Right ventricle myocardium inferior (tissue), 1 donor: ENCODE measurements at regions of chr1 and their contacts with region 1.

Region 1: DNA sequence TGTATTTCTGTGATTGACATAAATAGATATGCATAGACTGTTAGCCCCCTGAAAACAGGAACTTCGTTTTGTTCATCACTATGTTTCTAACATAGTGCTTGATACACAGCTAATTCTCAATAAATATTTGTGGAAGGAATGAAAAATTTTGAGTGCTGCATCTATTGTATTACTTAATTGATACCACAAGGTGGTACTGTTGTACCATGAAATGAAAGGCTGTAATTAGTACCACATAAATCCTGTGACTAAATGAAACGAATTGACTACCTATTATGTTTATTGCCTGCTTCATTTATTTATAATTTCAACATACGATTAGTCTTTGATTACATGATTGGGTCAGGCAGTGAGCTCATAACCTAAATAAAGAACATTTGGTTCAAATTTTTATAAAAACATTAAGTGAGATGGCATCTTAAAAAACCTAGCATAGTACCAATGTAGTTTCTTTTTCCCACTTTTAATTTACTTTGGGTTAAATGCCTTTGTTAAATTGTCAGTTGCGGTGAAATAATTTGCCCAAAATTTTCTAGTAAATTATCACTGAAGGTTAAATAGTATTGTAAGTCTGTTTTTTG is 15.0 kb upstream of the TGFB2 start:
- DNase-seq: no peak
- ATAC-seq: no peak

Region 2: DNA sequence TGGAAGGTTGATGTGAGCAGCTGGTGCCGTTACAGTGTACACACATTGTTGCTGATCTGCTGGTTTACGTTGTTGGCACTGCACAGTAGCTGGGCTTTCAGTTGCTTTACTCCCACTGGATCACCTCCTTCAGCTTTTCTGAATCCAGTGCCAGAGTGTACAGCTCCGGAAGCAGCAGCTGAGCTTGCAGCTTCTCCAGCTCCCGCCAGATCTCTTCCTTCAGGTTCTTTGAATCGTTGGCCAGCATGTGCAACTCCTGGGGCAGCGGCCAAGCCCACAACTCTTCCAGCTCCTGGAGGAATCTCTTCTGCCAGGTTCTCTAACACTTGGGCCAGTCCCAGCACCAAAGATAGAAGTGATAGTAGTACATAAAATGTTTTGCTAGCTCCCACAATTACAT is 194.8 kb before region 1 on chr1:
- intact Hi-C with region 1: no loop called
- DNase-seq: no peak
- ATAC-seq: no peak

Region 3: GRCh38 chr1:218401998-218402785 is 72.1 kb after region 1 on chr1:
- intact Hi-C with region 1: no loop called
- DNase-seq: no peak
- ATAC-seq: no peak

Region 4: DNA sequence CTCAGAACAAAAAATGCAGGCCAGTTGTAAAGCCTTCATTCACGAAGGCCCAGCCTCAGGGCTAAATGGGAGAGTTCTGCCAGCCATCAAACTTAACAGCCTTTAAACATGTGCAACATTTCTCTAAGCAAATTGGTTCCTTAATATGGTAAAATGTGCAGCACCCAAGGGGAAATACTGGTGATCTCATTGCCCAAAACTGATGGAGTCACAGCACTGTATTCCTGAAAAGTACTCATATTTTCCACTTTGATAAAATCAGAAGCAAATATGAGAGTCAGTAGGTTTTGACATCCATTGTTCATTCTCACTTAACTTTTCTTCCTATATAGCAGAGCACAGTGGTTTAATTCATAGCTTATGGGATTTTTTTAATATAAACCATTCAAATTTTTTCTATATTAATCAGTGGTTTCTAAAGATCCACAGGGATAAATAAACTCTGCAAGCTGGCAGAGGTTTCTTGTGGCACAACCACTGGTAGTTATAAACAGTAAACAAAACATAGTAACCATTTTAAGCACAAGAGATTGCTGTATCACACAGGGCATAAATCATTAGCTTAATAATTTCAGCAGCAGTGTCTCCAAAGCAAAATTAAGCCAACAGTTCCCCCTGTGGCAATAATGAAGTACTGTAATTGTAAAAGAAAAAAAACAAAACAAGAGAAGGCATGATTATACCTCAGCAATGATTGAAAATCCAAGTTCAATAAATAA is 736.7 kb after region 1 on chr1:
- intact Hi-C with region 1: loop called (anchors 2 kb)
- DNase-seq: no peak
- ATAC-seq: peak; percentile 64

Region 5: GRCh38 chr1:219566951-219567947 is 1237.1 kb after region 1 on chr1:
- intact Hi-C with region 1: loop called (anchors 5 kb)
- DNase-seq: no peak
- ATAC-seq: peak; percentile 59

Region 6: GRCh38 chr1:219817914-219818313 is 1487.8 kb after region 1 on chr1:
- intact Hi-C with region 1: loop called (anchors 5 kb)
- DNase-seq: no peak
- ATAC-seq: no peak